ENCODE measurements at regions of chr4 and their contacts with region 1.

Region 1: DNA sequence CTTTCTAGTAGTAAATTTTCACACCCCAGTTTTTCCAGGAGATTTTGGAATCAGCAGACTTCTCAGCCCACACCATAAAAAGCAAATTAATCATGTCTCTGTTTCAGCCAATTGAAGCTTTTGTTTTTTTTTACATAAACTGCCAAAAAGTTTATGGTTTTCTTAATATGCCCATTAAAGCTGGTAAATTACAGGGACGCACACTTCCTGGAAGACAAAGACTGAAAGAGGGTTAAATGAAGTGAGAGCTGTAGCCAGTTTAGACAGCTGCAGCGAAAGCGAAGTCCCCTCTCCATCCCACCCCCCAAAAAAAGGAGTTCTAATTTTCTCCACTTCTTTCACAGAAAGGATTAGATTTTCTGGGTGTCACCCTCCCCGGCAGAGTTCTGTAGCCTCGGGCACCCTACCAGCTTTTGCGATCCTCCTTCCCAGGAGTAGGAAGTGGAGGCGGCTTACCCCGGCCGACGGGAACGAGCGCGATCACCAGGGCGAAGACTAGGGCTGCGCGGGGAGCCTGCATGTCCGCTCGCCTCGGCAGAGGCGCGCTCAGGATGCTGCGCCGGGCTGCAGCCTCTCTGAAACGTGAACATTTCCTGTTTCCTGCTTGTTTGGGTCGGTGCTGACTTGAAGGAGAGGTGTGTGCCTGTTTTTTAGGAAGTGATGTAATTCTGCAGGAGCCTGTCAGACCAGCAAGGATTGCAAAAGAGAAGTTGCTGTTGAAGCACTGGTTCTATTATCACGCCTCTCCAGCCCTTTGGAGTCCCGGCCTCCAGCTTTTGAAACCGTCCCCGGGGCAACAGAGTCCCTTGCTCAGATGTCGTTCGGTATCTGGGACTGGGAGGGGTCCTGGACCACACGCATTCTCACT is at the start of gene TMEM154:
- DNase-seq: peak; percentile 67
- CTCF ChIP-seq: no peak

Region 2: GRCh38 chr4:152663203-152664066 is 16.2 kb before region 1 on chr4:
- CTCF ChIA-PET with region 1: interaction called, 38 read pairs
- POLR2A ChIA-PET with region 1: no interaction called
- DNase-seq: peak; percentile 53
- CTCF ChIP-seq: no peak

Region 3: GRCh38 chr4:152735396-152735859 is 55.8 kb after region 1 on chr4:
- CTCF ChIA-PET with region 1: interaction called, 16 read pairs
- POLR2A ChIA-PET with region 1: no interaction called
- DNase-seq: peak; percentile 53
- CTCF ChIP-seq: peak; percentile 47

Region 4: DNA sequence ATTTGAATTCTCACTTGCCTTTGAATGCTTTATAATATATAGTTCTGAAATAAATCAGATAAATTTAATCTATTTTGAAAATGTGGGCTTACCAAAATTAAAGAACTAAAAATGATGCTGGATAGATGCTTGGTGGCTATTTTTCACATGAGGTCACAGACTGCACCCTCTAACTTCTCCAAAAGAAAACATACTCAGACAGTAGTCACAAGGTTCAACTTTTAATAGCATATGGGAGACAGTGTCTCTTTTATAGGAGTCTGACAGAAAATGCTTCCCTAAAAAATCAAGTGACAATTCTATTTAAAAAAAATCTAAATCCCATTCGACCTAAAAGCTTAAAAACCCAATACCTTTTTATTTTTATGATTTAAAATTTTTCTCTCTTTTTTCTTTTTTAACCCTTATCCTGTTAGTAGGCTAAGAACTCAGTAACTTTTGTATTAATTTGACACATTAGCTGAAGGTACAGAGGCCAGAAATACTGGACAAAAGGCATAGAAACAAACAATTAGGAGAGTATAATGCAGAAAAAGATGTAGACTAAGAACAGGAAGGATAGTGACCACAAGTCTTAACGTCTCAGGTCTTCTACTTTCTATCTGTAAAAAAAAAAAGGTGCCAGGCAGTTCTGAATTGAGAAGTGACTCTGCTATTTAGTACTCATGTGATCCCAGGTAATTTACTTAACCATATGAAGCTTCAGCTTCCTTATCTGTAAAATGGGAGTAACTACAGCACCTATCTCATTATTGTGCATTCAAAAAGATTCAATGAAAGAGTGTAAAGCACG is 92.3 kb after region 1 on chr4:
- CTCF ChIA-PET with region 1: no interaction called
- POLR2A ChIA-PET with region 1: no interaction called
- DNase-seq: peak; percentile 32
- CTCF ChIP-seq: no peak

Measured in GM10248 (cell line).